ENCODE measurements at regions of chr1 and their contacts with region 1.

Region 1: DNA sequence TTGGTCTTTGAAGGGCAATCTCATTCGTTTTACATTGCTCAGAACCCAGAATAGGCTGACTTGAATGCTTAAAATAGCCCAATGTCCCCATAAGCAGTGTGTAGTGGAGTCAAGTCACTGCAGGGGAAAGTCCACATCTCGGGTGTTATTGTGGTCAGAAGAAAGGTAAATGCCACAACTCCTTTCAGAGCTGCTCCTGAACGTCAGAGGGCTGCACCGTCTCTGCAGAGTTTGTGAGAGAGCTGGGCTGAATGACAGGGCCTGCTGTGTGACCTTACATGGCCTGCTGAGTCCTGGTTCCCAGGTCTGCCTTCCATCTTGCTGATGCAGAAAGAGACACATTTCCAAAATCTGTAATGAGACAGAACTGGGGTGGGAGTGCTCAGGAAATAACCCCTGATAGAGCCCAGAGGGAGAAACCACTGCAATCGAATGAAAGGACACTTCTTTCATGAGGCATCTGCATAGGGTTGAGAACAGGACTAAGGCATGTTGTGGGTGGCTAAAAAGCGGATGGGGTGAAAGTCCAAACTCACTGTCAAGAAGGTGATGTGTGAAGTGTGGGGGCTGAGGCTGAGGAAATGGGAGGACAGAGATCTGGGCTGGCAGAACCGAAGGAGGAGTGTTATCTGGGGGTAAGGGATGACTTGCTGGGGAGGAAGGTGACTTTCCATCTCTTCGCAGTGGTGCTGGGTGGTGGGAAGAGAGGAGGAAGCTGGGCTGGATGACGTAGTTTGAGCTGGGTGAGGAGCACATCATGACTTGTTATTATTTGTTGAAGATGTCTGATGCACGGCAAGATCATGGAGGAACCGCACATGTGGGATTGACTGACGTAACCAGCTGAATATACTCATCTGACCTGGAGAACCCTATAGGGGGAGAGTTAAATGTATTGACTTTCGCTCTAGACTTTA is 33.7 kb downstream of the XCL2 start:
- DNase-seq: peak in 5 of 9 experiments; percentile 18 to 88 (median 63)
- ATAC-seq: peak; percentile 57
- H3K4me3 ChIP-seq: no peak overlapping the region
- H3K4me3 Mint-ChIP-seq: peak overlapping the region; percentile 4
- H3K27ac ChIP-seq: peak overlapping the region in 1 of 2 experiments; percentile 65
- H3K27ac Mint-ChIP-seq: peak overlapping the region; percentile 84
- H3K4me1 ChIP-seq: peaks cover 56% of the 10 kb centered on the region
- H3K4me1 Mint-ChIP-seq: peaks cover 72% of the 10 kb centered on the region
- H3K27me3 ChIP-seq: no peaks in the 10 kb centered on the region
- H3K27me3 Mint-ChIP-seq: no peaks in the 10 kb centered on the region
- CTCF ChIP-seq: no peak

Region 2: DNA sequence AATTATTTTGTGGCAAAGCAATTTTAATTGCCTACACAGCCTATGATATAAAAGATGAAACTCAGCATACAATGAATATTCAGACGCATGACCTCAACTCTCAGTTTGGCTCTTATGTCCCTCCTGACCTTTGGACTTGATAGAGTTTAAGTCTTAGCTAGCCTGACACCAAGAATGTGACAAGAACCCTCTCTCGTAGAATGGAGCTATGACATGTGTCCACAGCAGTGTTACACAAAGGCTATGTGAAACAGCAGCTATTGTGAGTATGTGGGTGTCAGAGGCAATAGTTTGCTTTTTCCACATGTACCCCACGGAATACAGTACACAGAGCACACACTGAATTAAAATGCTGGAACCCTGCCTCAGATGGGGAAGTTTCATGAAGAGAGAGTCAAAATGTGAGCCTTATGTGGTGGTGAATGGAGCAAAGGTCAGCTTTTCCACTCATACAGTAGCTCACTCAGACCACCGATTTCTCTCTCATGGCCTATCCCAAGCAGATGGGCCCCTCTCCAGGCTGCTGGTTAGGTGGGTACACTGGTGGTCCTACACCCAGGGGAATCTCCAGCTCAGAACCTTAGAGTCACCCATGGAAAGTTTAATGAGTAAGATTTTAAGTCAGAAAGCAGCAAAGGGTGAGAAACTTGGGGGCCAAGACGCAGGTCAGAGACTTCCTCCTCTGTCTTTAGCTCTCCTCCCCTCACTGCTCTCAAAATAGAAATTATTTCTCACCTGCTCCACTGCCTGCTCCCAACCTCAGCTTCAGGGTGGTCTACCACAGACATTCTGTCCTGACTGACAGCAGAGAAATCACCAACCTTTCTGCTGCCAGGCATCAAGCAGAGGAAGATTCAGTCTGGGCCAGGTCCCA is 43.8 kb after region 1 on chr1:
- CTCF ChIA-PET with region 1: interaction called, 4 read pairs
- POLR2A ChIA-PET with region 1: no interaction called
- intact Hi-C with region 1: loop called in 1 of 2 experiments (anchors 5 kb)
- DNase-seq: peak in 2 of 9 experiments; percentile 23 to 44
- ATAC-seq: peak; percentile 23
- H3K4me3 ChIP-seq: no peak overlapping the region
- H3K4me3 Mint-ChIP-seq: peak overlapping the region; percentile 3
- H3K27ac ChIP-seq: peak overlapping the region in 1 of 2 experiments; percentile 34
- H3K27ac Mint-ChIP-seq: peak overlapping the region; percentile 66
- H3K4me1 ChIP-seq: peaks cover 31% of the 10 kb centered on the region
- H3K4me1 Mint-ChIP-seq: peaks cover 61% of the 10 kb centered on the region
- H3K27me3 ChIP-seq: no peaks in the 10 kb centered on the region
- H3K27me3 Mint-ChIP-seq: no peaks in the 10 kb centered on the region
- CTCF ChIP-seq: no peak

Region 3: GRCh38 chr1:168572633-168573032 is 62.5 kb after region 1 on chr1:
- CTCF ChIA-PET with region 1: interaction called, 3 read pairs
- POLR2A ChIA-PET with region 1: no interaction called
- intact Hi-C with region 1: loop called in 1 of 2 experiments (anchors 5 kb)
- DNase-seq: no peak
- ATAC-seq: no peak
- H3K4me3 ChIP-seq: no peak overlapping the region
- H3K4me3 Mint-ChIP-seq: no peak overlapping the region
- H3K27ac ChIP-seq: no peak overlapping the region
- H3K27ac Mint-ChIP-seq: no peak overlapping the region
- H3K4me1 ChIP-seq: peaks cover 3% of the 10 kb centered on the region
- H3K4me1 Mint-ChIP-seq: peaks cover 26% of the 10 kb centered on the region
- H3K27me3 ChIP-seq: no peaks in the 10 kb centered on the region
- H3K27me3 Mint-ChIP-seq: no peaks in the 10 kb centered on the region
- CTCF ChIP-seq: no peak

Region 4: GRCh38 chr1:168623003-168623828 is 113.1 kb after region 1 on chr1:
- CTCF ChIA-PET with region 1: no interaction called
- POLR2A ChIA-PET with region 1: no interaction called
- intact Hi-C with region 1: no loop called
- DNase-seq: no peak
- ATAC-seq: no peak
- H3K4me3 ChIP-seq: no peak overlapping the region
- H3K4me3 Mint-ChIP-seq: no peak overlapping the region
- H3K27ac ChIP-seq: no peak overlapping the region
- H3K27ac Mint-ChIP-seq: no peak overlapping the region
- H3K4me1 ChIP-seq: no peaks in the 10 kb centered on the region
- H3K4me1 Mint-ChIP-seq: no peaks in the 10 kb centered on the region
- H3K27me3 ChIP-seq: no peaks in the 10 kb centered on the region
- H3K27me3 Mint-ChIP-seq: no peaks in the 10 kb centered on the region
- CTCF ChIP-seq: no peak

Measured in CD8-positive, alpha-beta T cell (primary cell).